PC-3 (cell line): ENCODE measurements at regions of chr14 and their contacts with region 1.

Region 1: GRCh38 chr14:68795597-68796417 is 2.9 kb upstream of the ZFP36L1 start:
- DNase-seq: peak; percentile 84
- ATAC-seq: peak; percentile 55
- H3K4me3 ChIP-seq: peak overlapping the region; percentile 90
- H3K27ac ChIP-seq: peak overlapping the region; percentile 97
- H3K4me1 ChIP-seq: peaks cover 19% of the 10 kb centered on the region
- H3K27me3 ChIP-seq: no peaks in the 10 kb centered on the region
- CTCF ChIP-seq: peak; percentile 66

Region 2: GRCh38 chr14:68140111-68140741 is 655.6 kb before region 1 on chr14:
- CTCF ChIA-PET with region 1: no interaction called
- POLR2A ChIA-PET with region 1: interaction called, 6 read pairs
- intact Hi-C with region 1: loop called (anchors 10 kb)
- DNase-seq: peak; percentile 99
- ATAC-seq: peak; percentile 70
- H3K4me3 ChIP-seq: peak overlapping the region; percentile 29; the same call in 1 of the 2 replicates
- H3K27ac ChIP-seq: peak overlapping the region; percentile 93
- H3K4me1 ChIP-seq: peaks cover 75% of the 10 kb centered on the region
- H3K27me3 ChIP-seq: no peaks in the 10 kb centered on the region
- CTCF ChIP-seq: no peak

Region 3: GRCh38 chr14:68408680-68409079 is 387.1 kb before region 1 on chr14:
- CTCF ChIA-PET with region 1: interaction called, 4 read pairs
- POLR2A ChIA-PET with region 1: interaction called, 10 read pairs
- intact Hi-C with region 1: no loop called
- DNase-seq: peak; percentile 63
- ATAC-seq: peak; percentile 59
- H3K4me3 ChIP-seq: no peak overlapping the region
- H3K27ac ChIP-seq: peak overlapping the region; percentile 22; the same call in 1 of the 2 replicates
- H3K4me1 ChIP-seq: peaks cover 56% of the 10 kb centered on the region
- H3K27me3 ChIP-seq: no peaks in the 10 kb centered on the region
- CTCF ChIP-seq: peak; percentile 63

Region 4: GRCh38 chr14:68548194-68549056 is 247.4 kb before region 1 on chr14:
- CTCF ChIA-PET with region 1: no interaction called
- POLR2A ChIA-PET with region 1: interaction called, 18 read pairs
- intact Hi-C with region 1: no loop called
- DNase-seq: peak; percentile 97
- ATAC-seq: peak; percentile 82
- H3K4me3 ChIP-seq: peak overlapping the region; percentile 13; the same call in 1 of the 2 replicates
- H3K27ac ChIP-seq: peak overlapping the region; percentile 98
- H3K4me1 ChIP-seq: peaks cover 47% of the 10 kb centered on the region
- H3K27me3 ChIP-seq: no peaks in the 10 kb centered on the region
- CTCF ChIP-seq: no peak

Region 5: DNA sequence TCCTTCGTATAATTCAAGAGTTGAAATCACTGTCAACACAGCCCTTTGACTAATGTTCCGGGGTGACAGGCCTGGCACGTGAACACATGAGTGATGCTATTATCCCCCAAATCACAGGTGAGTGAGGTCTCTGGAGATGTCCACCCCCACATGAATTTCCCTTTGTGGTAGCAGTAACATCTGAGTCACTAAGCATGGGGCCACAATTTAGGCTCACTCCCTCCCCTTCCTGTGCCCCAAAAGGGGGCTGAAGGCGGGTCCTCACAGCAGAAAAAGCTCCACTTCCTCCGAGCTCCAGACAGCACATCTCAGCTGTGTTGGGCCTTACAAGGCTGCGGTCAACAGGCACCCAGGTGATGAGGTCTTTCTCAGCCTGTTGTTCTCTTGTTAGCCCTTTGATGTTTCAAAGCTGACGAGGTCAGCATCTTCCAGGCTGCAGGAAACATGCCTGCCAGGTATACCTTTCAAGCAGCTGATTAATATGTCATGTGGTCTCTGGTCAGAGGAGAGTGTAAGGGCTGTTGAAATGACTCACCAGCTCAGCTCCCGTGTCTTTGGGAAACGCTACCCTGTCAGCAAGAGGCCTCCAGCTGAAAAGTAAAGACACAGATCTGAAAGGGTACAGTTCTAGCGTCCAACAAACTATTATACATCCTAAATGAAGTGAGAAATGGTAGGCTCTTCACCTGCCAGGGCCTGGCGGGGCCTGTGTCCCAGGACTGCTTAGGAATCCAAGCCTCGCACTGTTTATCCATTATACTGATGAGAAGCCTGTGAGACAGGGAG is 110.2 kb before region 1 on chr14:
- CTCF ChIA-PET with region 1: no interaction called
- POLR2A ChIA-PET with region 1: interaction called, 55 read pairs
- intact Hi-C with region 1: no loop called
- DNase-seq: peak; percentile 95
- ATAC-seq: peak; percentile 67
- H3K4me3 ChIP-seq: no peak overlapping the region
- H3K27ac ChIP-seq: peak overlapping the region; percentile 96
- H3K4me1 ChIP-seq: peaks cover 75% of the 10 kb centered on the region
- H3K27me3 ChIP-seq: no peaks in the 10 kb centered on the region
- CTCF ChIP-seq: no peak

Region 6: DNA sequence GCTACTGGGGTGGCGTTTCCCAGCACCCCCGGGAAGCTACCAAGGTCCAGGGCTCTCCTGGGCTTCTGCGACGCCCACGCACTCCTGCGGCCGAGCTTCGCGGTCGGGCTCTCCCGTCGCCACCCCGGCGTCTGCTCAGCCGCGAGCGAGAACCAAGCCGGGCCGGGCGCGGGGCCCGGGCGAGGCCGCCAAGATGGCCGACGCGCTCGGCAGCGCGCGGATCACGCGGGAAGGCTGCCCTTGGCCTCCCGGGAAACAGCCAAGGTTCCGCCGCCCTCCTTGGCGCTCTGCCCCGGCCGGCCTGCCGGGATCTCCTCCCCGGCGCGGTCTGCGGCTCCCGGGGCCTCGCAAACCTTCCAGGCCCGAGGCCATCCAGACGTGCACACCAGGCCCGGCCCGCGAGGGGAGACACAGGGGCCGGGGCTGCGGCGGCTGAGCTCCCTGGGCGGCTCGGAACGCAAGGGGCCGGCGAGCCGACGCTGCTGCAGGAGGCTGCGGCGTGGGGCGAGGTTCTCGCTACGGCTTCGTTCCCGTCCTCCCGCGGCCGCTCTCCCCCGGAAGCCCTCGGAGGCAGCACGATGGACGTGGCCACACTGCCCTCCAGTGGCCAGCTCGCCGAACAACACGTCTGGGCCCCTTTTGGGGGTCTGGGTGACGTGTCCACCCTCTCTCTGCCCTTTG is 20.6 kb after region 1 on chr14:
- CTCF ChIA-PET with region 1: interaction called, 6 read pairs
- POLR2A ChIA-PET with region 1: interaction called, 43 read pairs
- intact Hi-C with region 1: loop called (anchors 1 kb)
- DNase-seq: peak; percentile 92
- ATAC-seq: peak; percentile 90
- H3K4me3 ChIP-seq: peak overlapping the region; percentile 60
- H3K27ac ChIP-seq: peak overlapping the region; percentile 83
- H3K4me1 ChIP-seq: peaks cover 22% of the 10 kb centered on the region
- H3K27me3 ChIP-seq: no peaks in the 10 kb centered on the region
- CTCF ChIP-seq: peak; percentile 97